ENCODE measurements at regions of chr13 and their contacts with region 1.

Region 1: GRCh38 chr13:50911937-50912795 is 2.6 kb downstream of the RNASEH2B start:
- DNase-seq: peak; percentile 89 to 95
- ATAC-seq: peak; percentile 67 to 82 (median 70)
- H3K4me3 ChIP-seq: peak overlapping the region; percentile 71
- H3K4me3 Mint-ChIP-seq: peak overlapping the region; percentile 79
- H3K27ac ChIP-seq: no peak overlapping the region
- H3K27ac Mint-ChIP-seq: peak overlapping the region; percentile 83 to 94
- H3K4me1 ChIP-seq: peaks cover 30% of the 10 kb centered on the region
- H3K4me1 Mint-ChIP-seq: peaks cover 53 to 57% of the 10 kb centered on the region in 2 donors
- H3K27me3 ChIP-seq: no peaks in the 10 kb centered on the region
- H3K27me3 Mint-ChIP-seq: no peaks in the 10 kb centered on the region
- CTCF ChIP-seq: peak; percentile 80

Region 2: DNA sequence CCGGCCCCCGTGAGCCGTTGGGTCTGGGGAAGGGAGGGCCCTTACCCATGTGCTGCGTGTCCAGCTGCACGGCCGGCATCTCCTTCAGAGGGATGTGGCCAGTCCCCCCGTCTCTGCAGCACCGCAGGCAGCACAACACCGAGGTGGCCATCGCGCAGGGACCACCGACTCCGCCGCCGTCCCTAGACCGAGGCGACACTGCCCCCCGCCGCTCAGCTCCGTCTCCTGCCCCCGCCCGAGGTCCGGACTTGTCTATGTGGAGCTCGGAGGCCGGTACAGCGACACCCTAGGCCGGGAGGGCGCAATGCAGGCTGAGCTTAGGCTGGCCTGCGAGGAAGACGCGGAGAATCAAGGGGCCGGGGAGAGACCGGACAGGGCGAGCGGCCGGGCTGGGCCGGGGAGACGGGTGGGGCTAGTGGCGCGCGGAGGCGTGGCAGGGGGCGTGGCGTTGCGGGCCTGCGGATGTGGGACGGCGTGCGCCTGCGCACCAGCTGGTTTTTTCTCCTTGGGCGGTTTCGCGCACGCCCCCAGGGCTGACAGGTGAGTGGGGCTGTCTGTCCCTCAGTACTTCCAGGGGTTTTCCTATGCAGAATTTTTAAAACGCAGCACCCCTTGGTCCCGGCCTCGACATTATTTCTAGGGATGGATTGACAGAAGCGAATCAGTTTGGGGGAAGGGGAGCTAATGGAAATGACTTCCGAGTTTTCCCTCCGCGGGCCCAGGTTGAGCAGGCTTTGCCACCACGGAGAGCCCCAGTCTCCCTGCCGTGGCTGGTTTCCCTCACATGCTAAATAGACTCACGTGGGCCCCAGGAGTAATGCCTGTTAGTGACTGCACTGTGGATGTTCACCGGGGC is 975.9 kb before region 1 on chr13 and contains the start of gene SPRYD7:
- intact Hi-C with region 1: loop called (anchors 2 kb)
- DNase-seq: peak; percentile 96 to 97
- ATAC-seq: peak; percentile 95 to 99 (median 97)
- H3K4me3 ChIP-seq: peak within 1 kb of the TSS; percentile 64
- H3K4me3 Mint-ChIP-seq: peak within 1 kb of the TSS; percentile 93
- H3K27ac ChIP-seq: peak within 1 kb of the TSS; percentile 46
- H3K27ac Mint-ChIP-seq: peak within 1 kb of the TSS; percentile 79 to 91
- H3K4me1 ChIP-seq: peaks cover 14% of the 10 kb centered on the region
- H3K4me1 Mint-ChIP-seq: peaks cover 17 to 20% of the 10 kb centered on the region in 2 donors
- H3K27me3 ChIP-seq: no peaks in the 10 kb centered on the region
- H3K27me3 Mint-ChIP-seq: no peaks in the 10 kb centered on the region
- CTCF ChIP-seq: peak; percentile 78
- total RNA-seq, gene SPRYD7: 3.0 to 6.2 (median 4.4) TPM

Region 3: GRCh38 chr13:49996951-49997895 is 914.9 kb before region 1 on chr13 and contains the start of gene TRIM13:
- intact Hi-C with region 1: loop called (anchors 5 kb)
- DNase-seq: peak; percentile 79 to 90
- ATAC-seq: peak; percentile 79 to 89 (median 84)
- H3K4me3 ChIP-seq: peak within 1 kb of the TSS; percentile 100
- H3K4me3 Mint-ChIP-seq: peak within 1 kb of the TSS; percentile 90
- H3K27ac ChIP-seq: peak within 1 kb of the TSS; percentile 99
- H3K27ac Mint-ChIP-seq: peak within 1 kb of the TSS; percentile 80 to 90
- H3K4me1 ChIP-seq: peaks cover 17% of the 10 kb centered on the region
- H3K4me1 Mint-ChIP-seq: peaks cover 18 to 35% of the 10 kb centered on the region in 2 donors
- H3K27me3 ChIP-seq: no peaks in the 10 kb centered on the region
- H3K27me3 Mint-ChIP-seq: no peaks in the 10 kb centered on the region
- CTCF ChIP-seq: peak; percentile 79
- total RNA-seq, gene TRIM13: 18.9 to 22.1 (median 20.6) TPM

Region 4: DNA sequence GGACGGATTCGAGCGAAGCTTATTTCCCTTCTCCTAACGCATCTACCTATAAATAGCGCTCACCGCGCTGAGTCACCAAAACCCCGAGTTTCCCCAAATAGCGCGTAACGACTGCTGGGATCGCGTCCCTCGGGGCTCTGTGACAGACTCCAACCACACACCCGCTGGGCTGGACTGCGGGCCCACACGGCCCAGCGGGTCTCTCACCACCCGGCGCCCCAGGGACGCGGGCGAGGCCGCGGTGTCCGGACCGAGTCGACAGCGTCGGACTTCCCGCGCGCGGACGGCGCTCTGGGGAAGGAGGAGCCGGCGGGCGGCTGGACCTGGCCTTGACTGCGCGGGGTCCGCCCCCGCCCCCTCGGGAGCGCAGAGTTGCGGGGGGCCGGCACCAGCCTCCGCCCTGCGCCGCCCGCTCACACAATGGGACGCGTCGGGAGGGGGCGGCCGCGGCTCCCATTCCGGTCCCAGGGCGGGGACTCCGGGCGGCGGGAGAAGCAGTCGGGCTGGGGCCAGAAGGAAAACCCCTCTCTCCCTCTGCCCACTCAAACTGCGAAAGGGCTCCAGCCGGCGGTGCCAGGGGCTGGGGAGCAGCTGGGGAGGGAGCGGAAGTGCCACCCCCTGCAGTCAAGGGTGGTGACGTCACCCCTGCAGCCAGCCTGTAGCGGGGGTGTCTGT is 788.2 kb before region 1 on chr13:
- intact Hi-C with region 1: loop called (anchors 2 kb)
- DNase-seq: peak; percentile 82 to 89
- ATAC-seq: peak; percentile 65 to 88 (median 77)
- H3K4me3 ChIP-seq: peak overlapping the region; percentile 60
- H3K4me3 Mint-ChIP-seq: peak overlapping the region; percentile 91
- H3K27ac ChIP-seq: peak overlapping the region; percentile 95
- H3K27ac Mint-ChIP-seq: peak overlapping the region; percentile 93 to 98
- H3K4me1 ChIP-seq: peaks cover 32% of the 10 kb centered on the region
- H3K4me1 Mint-ChIP-seq: peaks cover 39 to 42% of the 10 kb centered on the region in 2 donors
- H3K27me3 ChIP-seq: peaks cover 1% of the 10 kb centered on the region
- H3K27me3 Mint-ChIP-seq: peaks cover 4 to 8% of the 10 kb centered on the region in 2 donors
- CTCF ChIP-seq: no peak

Region 5: GRCh38 chr13:50676602-50677001 is 235.6 kb before region 1 on chr13:
- intact Hi-C with region 1: loop called (anchors 5 kb)
- DNase-seq: peak in 1 of 2 donors; percentile 45
- ATAC-seq: peak; percentile 80 to 93 (median 90)
- H3K4me3 ChIP-seq: no peak overlapping the region
- H3K4me3 Mint-ChIP-seq: peak overlapping the region; percentile 42
- H3K27ac ChIP-seq: no peak overlapping the region
- H3K27ac Mint-ChIP-seq: peak overlapping the region in 1 of 2 donors; percentile 68
- H3K4me1 ChIP-seq: peaks cover 37% of the 10 kb centered on the region
- H3K4me1 Mint-ChIP-seq: peaks cover 39 to 44% of the 10 kb centered on the region in 2 donors
- H3K27me3 ChIP-seq: peaks cover 40% of the 10 kb centered on the region
- H3K27me3 Mint-ChIP-seq: peaks cover 51 to 89% of the 10 kb centered on the region in 2 donors
- CTCF ChIP-seq: no peak

Region 6: DNA sequence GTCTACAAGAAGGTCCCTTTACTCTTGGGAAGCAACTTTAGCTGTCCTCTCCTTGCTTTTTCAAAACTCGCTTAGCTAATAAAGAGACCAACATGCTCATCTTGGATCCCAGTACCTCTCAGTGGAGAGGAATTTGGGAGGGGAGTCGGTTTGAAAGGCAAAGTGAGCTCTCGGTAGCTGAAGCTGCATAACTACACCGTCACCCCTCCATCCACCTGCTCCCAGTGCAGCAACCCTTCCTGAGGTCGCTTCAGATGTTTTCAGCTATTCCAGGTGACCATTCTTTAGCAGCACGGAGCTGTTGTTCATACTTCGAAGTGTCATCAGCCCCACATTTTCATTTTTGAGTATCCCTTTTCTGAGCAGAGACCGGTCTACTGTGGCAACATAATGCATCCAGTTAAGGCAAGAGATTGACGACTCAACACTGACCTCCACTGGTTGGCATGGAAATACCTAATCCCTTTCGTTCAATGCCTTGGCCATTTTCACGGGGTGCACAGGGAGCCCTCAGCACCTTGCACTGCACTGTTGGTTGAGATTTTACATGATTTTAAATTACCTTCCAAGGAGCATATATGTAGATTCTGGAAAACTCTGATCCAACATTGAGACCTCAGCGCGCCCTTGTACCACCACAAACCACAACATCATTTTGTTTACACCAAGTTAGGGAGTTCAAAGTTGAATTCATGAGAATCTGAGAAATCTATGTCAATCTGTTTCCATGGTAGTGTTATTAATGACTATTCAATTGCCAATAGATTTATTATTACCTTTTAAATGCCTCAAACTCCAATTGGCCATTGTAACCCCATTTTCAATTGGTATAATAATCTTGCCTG is 110.9 kb before region 1 on chr13:
- intact Hi-C with region 1: loop called (anchors 1 kb)
- DNase-seq: peak; percentile 36 to 86
- ATAC-seq: peak; percentile 91 to 98 (median 97)
- H3K4me3 ChIP-seq: no peak overlapping the region
- H3K4me3 Mint-ChIP-seq: no peak overlapping the region
- H3K27ac ChIP-seq: peak overlapping the region; percentile 4
- H3K27ac Mint-ChIP-seq: no peak overlapping the region
- H3K4me1 ChIP-seq: peaks cover 7% of the 10 kb centered on the region
- H3K4me1 Mint-ChIP-seq: peaks cover 0 to 6% of the 10 kb centered on the region in 2 donors
- H3K27me3 ChIP-seq: no peaks in the 10 kb centered on the region
- H3K27me3 Mint-ChIP-seq: peaks cover 7 to 9% of the 10 kb centered on the region in 2 donors
- CTCF ChIP-seq: peak; percentile 80

Region 7: GRCh38 chr13:51070005-51070649 is 158.0 kb after region 1 on chr13:
- intact Hi-C with region 1: loop called (anchors 5 kb)
- DNase-seq: peak; percentile 71 to 86
- ATAC-seq: peak; percentile 66 to 76 (median 73)
- H3K4me3 ChIP-seq: no peak overlapping the region
- H3K4me3 Mint-ChIP-seq: no peak overlapping the region
- H3K27ac ChIP-seq: no peak overlapping the region
- H3K27ac Mint-ChIP-seq: no peak overlapping the region
- H3K4me1 ChIP-seq: peaks cover 26% of the 10 kb centered on the region
- H3K4me1 Mint-ChIP-seq: peaks cover 14 to 17% of the 10 kb centered on the region in 2 donors
- H3K27me3 ChIP-seq: no peaks in the 10 kb centered on the region
- H3K27me3 Mint-ChIP-seq: peaks cover 9 to 21% of the 10 kb centered on the region in 2 donors
- CTCF ChIP-seq: peak; percentile 92

Region 8: GRCh38 chr13:51202477-51203046 is 290.4 kb after region 1 on chr13:
- intact Hi-C with region 1: no loop called
- DNase-seq: no peak
- ATAC-seq: no peak
- H3K4me3 ChIP-seq: no peak overlapping the region
- H3K4me3 Mint-ChIP-seq: no peak overlapping the region
- H3K27ac ChIP-seq: no peak overlapping the region
- H3K27ac Mint-ChIP-seq: no peak overlapping the region
- H3K4me1 ChIP-seq: no peaks in the 10 kb centered on the region
- H3K4me1 Mint-ChIP-seq: no peaks in the 10 kb centered on the region
- H3K27me3 ChIP-seq: no peaks in the 10 kb centered on the region
- H3K27me3 Mint-ChIP-seq: peaks cover 24 to 32% of the 10 kb centered on the region in 2 donors
- CTCF ChIP-seq: no peak